ENCODE measurements at regions of chr4 and their contacts with region 1.

Region 1: DNA sequence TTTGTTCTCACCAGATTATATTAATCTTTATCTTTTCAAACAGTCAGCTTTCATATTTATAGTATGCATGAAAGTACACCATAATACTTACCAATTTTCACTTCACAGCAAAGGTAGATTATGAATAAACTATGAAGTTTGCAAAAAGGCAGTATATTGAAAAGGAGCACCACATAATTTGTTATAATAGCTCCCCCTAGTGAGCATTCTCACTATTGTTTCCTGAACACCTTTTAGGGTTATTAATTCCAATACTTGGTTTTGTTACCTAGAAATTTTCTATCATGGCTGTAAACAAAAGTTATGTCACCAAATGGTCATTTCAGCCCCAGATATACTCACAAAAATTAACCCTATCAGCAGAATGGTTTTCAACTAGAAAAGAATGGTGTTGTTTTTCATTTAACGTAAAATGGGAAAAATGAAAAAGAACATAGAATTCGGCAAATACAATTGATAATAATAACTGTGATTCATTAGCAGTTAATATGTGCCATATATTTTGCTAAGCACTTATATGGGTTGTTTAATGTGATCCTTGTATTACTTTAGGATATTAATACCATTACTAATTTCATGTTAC is 30.2 kb upstream of the NKX6-1 start:
- DNase-seq: no peak
- ATAC-seq: peak; percentile 64
- H3K4me3 ChIP-seq: no peak overlapping the region
- H3K27ac ChIP-seq: no peak overlapping the region
- H3K4me1 ChIP-seq: no peaks in the 10 kb centered on the region
- H3K27me3 ChIP-seq: no peaks in the 10 kb centered on the region
- CTCF ChIP-seq: peak; percentile 38 to 53 (median 50); a peak in 4 of 6 replicates
- EP300 ChIP-seq: no peak
- POLR2A ChIP-seq: no peak
- RAD21 ChIP-seq: peak; percentile 48

Region 2: DNA sequence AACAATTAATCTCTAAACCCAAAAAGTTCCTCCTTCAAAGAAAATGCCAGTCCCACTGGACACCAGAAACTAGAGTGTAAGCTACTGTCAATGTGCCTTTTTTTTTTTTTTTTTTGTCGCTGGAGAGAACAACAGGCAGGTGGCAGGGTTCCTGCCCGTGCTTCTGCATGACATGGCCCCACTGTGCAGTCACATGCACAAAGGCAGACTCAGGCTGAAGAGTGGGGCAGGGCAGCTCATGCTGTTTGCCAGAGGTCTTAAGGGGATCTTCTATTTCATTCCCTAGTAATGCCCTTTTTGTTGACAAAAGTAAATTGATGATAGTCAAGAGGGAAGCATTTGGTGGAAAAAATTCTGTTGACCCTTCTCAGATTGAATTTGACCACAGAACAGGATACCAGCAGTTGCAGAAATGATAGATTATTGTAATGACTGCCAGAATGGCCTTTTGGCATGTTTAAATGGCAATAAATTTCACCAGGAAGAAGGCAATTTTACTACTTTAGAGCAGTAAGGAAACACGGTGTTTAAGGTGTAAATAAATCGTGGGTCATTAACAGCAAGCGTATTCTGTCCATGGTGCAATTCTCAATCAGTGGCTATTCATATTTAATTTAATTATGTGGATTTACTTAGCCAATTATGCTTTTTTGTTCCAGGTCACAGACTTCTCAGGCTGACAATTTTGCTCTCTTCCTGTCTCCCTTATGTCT is 111.1 kb before region 1 on chr4:
- CTCF ChIA-PET with region 1: no interaction called
- POLR2A ChIA-PET with region 1: no interaction called
- RAD21 ChIA-PET with region 1: no interaction called
- SMC1A ChIA-PET with region 1: no interaction called
- in situ Hi-C with region 1: no loop called
- intact Hi-C with region 1: no loop called
- DNase-seq: no peak
- ATAC-seq: no peak
- H3K4me3 ChIP-seq: no peak overlapping the region
- H3K27ac ChIP-seq: no peak overlapping the region
- H3K4me1 ChIP-seq: no peaks in the 10 kb centered on the region
- H3K27me3 ChIP-seq: no peaks in the 10 kb centered on the region
- CTCF ChIP-seq: no peak
- EP300 ChIP-seq: no peak
- POLR2A ChIP-seq: no peak
- RAD21 ChIP-seq: no peak

Region 3: DNA sequence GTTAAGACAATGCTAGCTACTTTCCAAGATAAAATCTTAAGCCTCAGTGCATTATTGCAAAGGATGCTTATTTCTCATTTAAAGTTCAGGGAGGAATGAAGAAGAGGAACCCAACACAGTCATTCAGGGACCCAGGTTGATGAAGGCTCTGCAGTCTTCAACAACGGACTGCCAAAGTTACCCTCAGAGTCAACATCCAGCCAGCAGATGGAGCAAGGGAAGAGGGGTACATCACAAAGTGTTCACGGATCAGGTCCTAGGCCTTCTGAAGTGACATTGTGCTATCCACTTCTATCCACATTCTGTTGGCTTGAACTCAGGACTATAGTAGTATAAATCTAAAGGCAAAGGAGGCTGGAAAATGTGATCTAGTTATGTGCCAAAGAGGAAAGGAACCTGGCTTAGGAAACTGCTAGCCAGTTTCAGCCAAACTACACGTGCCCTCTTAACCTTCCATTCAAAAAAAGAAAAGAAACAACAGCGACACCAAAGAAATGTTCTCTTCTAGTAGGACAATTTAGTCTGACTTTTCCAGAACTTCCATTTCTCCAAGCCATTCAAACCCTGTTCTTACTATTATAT is 59.0 kb before region 1 on chr4:
- CTCF ChIA-PET with region 1: no interaction called
- POLR2A ChIA-PET with region 1: no interaction called
- RAD21 ChIA-PET with region 1: no interaction called
- SMC1A ChIA-PET with region 1: no interaction called
- in situ Hi-C with region 1: loop called (anchors 10 kb)
- intact Hi-C with region 1: no loop called
- DNase-seq: no peak
- ATAC-seq: peak; percentile 45; the same call in 1 of the 3 replicates
- H3K4me3 ChIP-seq: no peak overlapping the region
- H3K27ac ChIP-seq: no peak overlapping the region
- H3K4me1 ChIP-seq: no peaks in the 10 kb centered on the region
- H3K27me3 ChIP-seq: no peaks in the 10 kb centered on the region; a peak in 1 of 4 replicates
- CTCF ChIP-seq: peak; percentile 18 to 28 (median 19); a peak in 3 of 6 replicates
- EP300 ChIP-seq: no peak
- POLR2A ChIP-seq: no peak
- RAD21 ChIP-seq: no peak